ENCODE measurements at regions of chr2 and their contacts with region 1.

Region 1: GRCh38 chr2:217988014-217988839 is 14.6 kb downstream of the TNS1 start:
- DNase-seq: peak; percentile 56 to 61
- ATAC-seq: peak; percentile 56 to 86; a peak in 5 of 6 replicates
- H3K4me3 ChIP-seq: no peak overlapping the region
- H3K27ac ChIP-seq: peak overlapping the region; percentile 55 to 71
- H3K4me1 ChIP-seq: peaks cover 24% of the 10 kb centered on the region
- CTCF ChIP-seq: peak; percentile 90
- EP300 ChIP-seq: no peak
- POLR2A ChIP-seq: no peak
- RAD21 ChIP-seq: peak; percentile 91 to 93

Region 2: DNA sequence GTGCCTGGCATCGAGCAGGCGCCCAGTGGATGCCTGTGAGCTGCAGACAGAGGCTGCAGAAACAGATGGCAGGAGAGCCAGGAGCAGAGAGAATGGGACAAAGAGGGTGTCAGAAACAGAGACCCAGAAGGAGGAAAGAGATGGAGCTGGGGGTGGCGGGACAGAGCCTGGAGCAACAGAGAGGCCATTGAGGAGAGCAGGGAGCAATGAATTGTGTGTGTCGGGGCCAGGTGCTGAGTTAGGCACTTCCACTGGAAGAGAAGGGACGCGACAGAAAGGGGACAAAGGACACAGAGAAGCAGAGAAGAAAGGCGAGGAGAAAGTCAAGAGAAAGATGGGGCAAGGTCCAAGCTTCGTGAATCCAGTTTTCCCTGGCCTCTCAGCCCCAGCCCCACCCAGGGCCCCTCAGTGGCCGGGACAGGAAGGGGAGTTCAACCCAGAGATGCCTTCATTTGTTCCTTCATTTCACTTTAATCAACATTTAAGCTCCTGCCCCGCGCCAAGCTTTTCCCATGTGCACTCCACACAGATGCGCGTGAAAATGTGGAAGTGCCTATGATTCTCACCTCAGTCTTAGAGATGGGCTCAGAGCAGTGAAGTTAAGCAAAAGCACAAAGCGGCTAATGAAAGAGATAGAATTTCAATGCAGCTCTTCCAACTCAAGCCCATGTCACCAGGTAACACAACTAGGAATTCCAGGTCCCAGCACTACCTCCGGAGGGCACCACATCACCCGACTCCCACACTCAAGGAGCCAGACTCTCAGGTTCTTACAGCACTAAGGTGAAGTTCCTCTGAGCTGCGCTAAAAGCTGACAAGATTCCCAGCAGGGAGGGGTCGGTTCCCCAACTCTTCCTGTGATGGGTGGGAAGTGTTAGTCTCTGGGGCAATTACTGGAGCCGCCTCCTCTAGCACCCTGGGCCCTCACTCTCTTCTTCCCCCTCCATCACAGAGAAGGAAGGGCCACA is 40.6 kb before region 1 on chr2:
- CTCF ChIA-PET with region 1: interaction called, 10 read pairs
- POLR2A ChIA-PET with region 1: no interaction called
- DNase-seq: no peak
- ATAC-seq: no peak
- H3K4me3 ChIP-seq: no peak overlapping the region
- H3K27ac ChIP-seq: no peak overlapping the region
- H3K4me1 ChIP-seq: peaks cover 35% of the 10 kb centered on the region
- CTCF ChIP-seq: no peak; the same call in 2 of the 3 replicates
- EP300 ChIP-seq: no peak
- POLR2A ChIP-seq: no peak
- RAD21 ChIP-seq: no peak

Region 3: GRCh38 chr2:218003981-218004419 is 15.8 kb after region 1 on chr2:
- CTCF ChIA-PET with region 1: interaction called, 20 read pairs
- POLR2A ChIA-PET with region 1: no interaction called
- DNase-seq: peak in 1 of 2 experiments; percentile 73
- ATAC-seq: peak; percentile 51 to 77; a peak in 5 of 6 replicates
- H3K4me3 ChIP-seq: no peak overlapping the region
- H3K27ac ChIP-seq: peak overlapping the region; percentile 79 to 91
- H3K4me1 ChIP-seq: peaks cover 74% of the 10 kb centered on the region
- CTCF ChIP-seq: no peak
- EP300 ChIP-seq: peak in 1 of 2 experiments; percentile 38; a peak in 1 of 5 replicates
- POLR2A ChIP-seq: no peak
- RAD21 ChIP-seq: no peak

Region 4: DNA sequence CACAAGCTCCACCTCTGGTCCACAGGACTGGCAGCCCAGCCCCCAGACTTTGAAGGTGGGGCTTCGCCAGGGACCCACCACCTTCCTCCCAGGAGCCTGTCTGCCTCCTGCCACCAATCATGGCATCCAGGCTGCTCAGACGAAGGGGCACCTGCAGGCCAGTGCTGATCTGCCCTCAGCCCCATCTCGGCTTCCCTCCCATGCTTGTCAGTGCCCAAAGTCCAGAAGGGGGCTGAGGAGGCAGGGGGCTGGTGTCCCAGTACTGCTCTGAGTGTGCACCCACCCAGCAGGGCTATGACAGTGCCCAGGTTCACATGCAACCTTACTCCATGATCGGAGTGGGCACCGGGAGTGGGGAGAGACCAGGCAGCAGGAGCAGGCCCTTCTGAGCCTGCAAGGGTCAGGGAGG is 55.5 kb after region 1 on chr2:
- CTCF ChIA-PET with region 1: no interaction called
- POLR2A ChIA-PET with region 1: no interaction called
- DNase-seq: no peak
- ATAC-seq: no peak; a peak in 1 of 6 replicates
- H3K4me3 ChIP-seq: no peak overlapping the region
- H3K27ac ChIP-seq: no peak overlapping the region
- H3K4me1 ChIP-seq: no peaks in the 10 kb centered on the region
- CTCF ChIP-seq: no peak
- EP300 ChIP-seq: no peak
- POLR2A ChIP-seq: no peak
- RAD21 ChIP-seq: no peak